ENCODE measurements at regions of chr4 and their contacts with region 1.

Region 1: DNA sequence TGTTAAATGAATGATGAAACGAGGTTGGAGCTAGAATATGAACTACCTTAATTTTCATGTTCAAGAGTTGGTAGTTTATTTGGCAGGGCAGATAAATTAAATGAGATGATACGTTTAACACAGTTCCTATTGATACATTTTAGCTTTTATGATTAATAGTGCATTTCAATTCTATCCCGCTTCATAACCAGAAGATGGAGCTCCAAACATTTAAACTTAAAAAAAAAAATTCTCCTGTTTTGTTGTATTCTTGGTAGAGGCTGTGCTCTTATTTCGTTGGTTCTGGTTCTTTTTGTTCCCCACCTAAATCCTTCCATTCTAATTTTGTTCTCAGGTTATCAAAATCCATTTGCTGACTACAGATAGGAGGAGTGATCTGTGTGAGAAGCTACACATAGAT is 71.8 kb upstream of the PTPN13 start:
- DNase-seq: no peak

Region 2: GRCh38 chr4:86593688-86594558 is 71.6 kb after region 1 on chr4 and contains the start of gene PTPN13:
- intact Hi-C with region 1: no loop called
- DNase-seq: peak; percentile 97 to 100 (median 100)

Region 3: DNA sequence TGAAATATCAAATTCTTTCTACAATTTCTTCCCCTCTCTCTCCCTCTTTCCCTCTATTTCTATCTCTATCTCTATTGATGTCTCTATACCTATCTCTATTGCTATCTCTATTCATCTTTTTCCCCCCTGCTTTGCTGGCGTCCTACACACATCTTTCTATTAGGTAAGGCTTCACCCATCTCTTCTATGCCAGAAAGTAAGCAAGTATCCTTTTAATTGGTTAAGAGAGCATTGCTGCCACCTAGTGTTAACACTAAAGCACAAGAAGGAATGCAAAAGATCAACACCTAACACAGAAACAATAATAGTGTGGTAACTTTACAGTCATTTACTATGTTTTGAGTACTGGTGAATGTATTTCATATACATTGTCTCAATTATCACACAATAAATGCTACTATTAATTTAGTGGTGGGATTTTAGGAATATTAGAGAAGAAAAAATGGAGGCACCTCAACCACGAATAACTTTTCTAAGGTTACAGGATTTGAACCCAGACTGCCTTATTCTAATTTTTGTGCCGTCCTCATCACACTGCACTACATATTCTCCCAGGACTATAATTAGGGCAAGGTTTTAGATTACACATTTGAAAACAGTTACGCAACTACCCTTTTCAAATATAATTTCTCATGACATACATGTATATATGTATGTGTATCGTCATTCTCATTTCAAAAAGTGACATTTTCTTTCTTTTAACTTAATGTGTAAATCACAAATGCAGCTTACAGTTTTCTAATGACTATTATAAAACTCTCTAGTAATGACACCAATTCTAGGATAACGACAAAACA is 373.5 kb after region 1 on chr4:
- intact Hi-C with region 1: loop called (anchors 10 kb)
- DNase-seq: peak in 12 of 42 donors; percentile 15 to 79 (median 51)